ENCODE measurements at regions of chr3 and their contacts with region 1.

Region 1: GRCh38 chr3:15332405-15333098 is at the start of gene SH3BP5:
- DNase-seq: peak; percentile 76
- ATAC-seq: peak; percentile 95
- H3K4me3 Mint-ChIP-seq: peak within 1 kb of the TSS; percentile 84
- H3K27ac Mint-ChIP-seq: peak within 1 kb of the TSS; percentile 71
- H3K4me1 Mint-ChIP-seq: peaks cover 34% of the 10 kb centered on the region
- H3K27me3 Mint-ChIP-seq: peaks cover 25% of the 10 kb centered on the region
- total RNA-seq, gene SH3BP5: 12.6 to 15.0 TPM

Region 2: DNA sequence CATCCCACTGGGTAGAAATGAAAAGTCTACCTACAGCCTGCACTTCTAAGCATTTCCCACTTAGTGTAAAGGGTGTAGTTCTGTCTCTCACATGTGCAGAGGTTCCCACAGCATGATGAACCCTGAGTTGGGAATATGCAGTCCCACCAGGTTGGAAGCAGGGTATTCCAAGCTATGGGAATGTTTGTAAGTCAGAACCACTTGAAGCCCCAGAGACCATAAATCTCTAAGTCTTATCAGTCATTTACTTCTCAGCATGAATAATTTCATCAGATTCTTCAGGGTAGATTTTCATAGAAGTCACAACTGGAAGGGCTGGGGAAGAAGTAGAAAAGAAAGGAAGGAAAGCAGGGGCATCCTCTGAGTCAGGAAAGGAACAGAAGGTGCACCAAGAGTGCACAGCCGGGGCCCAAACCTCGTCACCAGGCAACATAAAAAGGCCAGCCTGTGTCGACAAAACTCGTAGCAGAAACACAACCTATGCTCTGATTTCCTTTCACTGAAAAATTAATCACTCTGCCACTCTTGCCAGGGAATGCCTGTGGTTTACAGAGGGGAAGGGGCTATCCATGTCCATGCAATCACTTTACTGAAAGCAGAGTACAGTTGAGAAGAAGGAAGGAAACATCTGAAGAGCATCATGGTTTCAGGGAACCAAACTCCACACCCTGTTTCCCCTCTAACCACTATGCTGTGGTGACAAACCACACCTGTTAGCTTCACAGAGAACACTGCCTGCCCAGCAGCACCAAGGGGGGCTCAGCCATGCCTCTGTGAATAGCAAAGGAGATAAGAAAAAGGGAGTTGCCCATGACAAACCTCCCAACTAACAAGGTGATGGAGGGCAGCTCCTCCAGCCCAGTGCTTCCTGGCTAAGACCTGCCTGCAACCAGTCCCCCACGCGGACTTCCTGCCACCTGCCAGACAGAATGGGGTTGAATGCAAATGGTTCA is 40.7 kb before region 1 on chr3:
- CTCF ChIA-PET with region 1: interaction called, 13 read pairs
- POLR2A ChIA-PET with region 1: no interaction called
- DNase-seq: peak; percentile 88
- ATAC-seq: peak; percentile 97
- H3K4me3 Mint-ChIP-seq: peak overlapping the region; percentile 66
- H3K27ac Mint-ChIP-seq: peak overlapping the region; percentile 95
- H3K4me1 Mint-ChIP-seq: peaks cover 55% of the 10 kb centered on the region
- H3K27me3 Mint-ChIP-seq: peaks cover 23% of the 10 kb centered on the region

Region 3: DNA sequence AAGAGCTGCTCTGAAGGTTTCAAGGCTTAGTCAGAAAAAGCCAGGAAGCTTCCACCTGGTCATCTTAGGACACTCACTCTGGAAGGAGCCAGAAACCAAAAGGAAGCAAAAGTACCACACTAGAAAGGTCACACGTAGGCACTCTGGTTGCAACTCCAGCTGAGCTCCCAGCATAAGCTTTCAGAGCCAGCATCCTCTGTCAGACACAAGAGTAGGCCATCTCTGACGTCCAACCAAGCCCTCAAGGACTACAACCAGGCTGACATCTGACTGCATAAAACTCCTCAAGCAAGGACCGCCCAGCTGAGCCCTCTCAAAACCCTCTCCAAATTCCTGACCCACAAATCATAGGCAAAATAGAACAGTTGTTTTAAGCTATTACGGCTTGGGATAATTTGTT is 13.0 kb before region 1 on chr3:
- CTCF ChIA-PET with region 1: interaction called, 14 read pairs
- POLR2A ChIA-PET with region 1: no interaction called
- DNase-seq: no peak
- ATAC-seq: no peak
- H3K4me3 Mint-ChIP-seq: no peak overlapping the region
- H3K27ac Mint-ChIP-seq: no peak overlapping the region
- H3K4me1 Mint-ChIP-seq: peaks cover 26% of the 10 kb centered on the region
- H3K27me3 Mint-ChIP-seq: no peaks in the 10 kb centered on the region

Region 4: DNA sequence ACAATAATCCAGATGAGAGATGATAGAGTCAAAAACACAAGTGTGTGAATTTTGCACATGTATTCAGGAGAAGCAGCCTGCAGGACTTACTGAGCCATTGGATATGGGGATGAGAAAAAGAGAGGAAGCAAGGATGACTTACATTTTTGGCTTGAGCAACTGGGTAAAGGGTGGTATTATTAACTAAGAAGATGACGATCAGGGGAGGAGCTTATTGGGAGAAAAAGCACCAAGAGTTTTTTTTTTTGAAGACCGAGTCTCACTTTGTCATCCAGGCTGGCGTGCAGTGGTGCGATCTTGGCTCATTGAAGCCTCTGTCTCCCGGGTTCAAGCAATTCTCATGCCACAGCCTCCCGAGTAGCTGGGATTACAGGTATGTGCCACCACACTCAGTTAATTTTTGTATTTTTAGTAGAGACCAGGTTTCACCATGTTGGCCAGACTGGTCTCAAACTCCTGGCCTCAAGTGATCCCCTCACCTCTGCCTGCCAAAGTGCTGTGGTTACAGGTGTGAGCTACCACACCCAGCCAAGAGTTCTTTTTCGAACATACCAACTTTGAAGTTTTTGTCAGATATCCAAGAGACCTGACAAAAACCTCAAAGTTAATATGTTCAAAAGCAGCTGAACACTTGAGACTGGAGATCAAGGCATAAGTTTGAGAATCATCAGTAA is 14.6 kb after region 1 on chr3:
- CTCF ChIA-PET with region 1: interaction called, 10 read pairs
- POLR2A ChIA-PET with region 1: interaction called, 4 read pairs
- DNase-seq: no peak
- ATAC-seq: no peak
- H3K4me3 Mint-ChIP-seq: no peak overlapping the region
- H3K27ac Mint-ChIP-seq: peak overlapping the region; percentile 21
- H3K4me1 Mint-ChIP-seq: peaks cover 32% of the 10 kb centered on the region
- H3K27me3 Mint-ChIP-seq: peaks cover 16% of the 10 kb centered on the region

Region 5: DNA sequence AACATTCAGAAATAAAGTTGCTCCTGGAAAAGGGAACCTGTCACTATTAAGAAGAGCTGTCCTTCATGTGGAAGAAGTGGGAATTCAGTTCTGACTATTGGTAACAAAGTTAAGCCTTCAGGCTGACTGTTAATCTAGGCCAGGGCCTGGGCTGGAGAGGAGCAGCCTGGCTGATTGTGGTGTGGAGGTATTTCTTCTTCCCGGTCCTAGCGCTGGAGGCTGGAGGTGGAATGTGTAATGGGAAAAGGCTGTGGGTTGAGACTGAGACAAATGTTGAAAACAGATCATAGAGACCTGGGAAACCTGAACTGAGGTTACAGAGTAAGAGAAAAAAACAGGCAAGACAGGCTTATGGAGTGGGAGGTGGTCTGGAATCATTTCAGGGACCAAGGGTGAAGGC is 23.6 kb after region 1 on chr3:
- CTCF ChIA-PET with region 1: interaction called, 21 read pairs
- POLR2A ChIA-PET with region 1: interaction called, 5 read pairs
- DNase-seq: no peak
- ATAC-seq: no peak
- H3K4me3 Mint-ChIP-seq: peak overlapping the region; percentile 20
- H3K27ac Mint-ChIP-seq: peak overlapping the region; percentile 64
- H3K4me1 Mint-ChIP-seq: peaks cover 45% of the 10 kb centered on the region
- H3K27me3 Mint-ChIP-seq: no peaks in the 10 kb centered on the region

Region 6: GRCh38 chr3:15361494-15362212 is 29.1 kb after region 1 on chr3:
- CTCF ChIA-PET with region 1: interaction called, 13 read pairs
- POLR2A ChIA-PET with region 1: interaction called, 5 read pairs
- DNase-seq: peak; percentile 24
- ATAC-seq: peak; percentile 50
- H3K4me3 Mint-ChIP-seq: no peak overlapping the region
- H3K27ac Mint-ChIP-seq: no peak overlapping the region
- H3K4me1 Mint-ChIP-seq: peaks cover 29% of the 10 kb centered on the region
- H3K27me3 Mint-ChIP-seq: peaks cover 7% of the 10 kb centered on the region

Region 7: DNA sequence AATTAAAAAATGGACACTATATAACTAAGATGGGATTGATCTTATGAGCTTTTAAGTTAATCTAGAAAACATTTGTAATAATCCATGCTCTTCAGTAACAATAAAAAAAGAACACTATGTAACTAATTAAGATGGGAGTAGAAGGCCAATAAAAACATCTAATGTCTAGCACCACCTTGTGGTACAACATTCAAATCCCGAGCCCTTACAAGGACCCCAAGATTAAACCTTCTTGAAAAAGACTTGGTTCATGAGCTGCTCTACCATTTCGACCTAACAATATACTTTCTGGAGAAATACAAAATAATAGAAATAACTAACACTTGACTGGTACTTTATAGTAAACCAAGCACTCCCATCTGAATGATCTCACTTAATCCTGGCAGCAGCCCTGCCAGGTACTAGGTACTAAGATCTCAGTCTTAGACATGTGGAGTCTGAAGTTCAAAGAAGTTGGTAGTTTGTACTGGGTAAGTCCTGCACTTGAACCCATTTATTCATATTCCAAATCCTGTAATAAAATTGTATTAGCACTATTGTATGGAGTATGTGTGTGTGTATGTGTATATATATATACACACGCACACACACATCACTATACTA is 73.0 kb after region 1 on chr3:
- CTCF ChIA-PET with region 1: interaction called, 10 read pairs
- POLR2A ChIA-PET with region 1: no interaction called
- DNase-seq: peak; percentile 52
- ATAC-seq: peak; percentile 81
- H3K4me3 Mint-ChIP-seq: no peak overlapping the region
- H3K27ac Mint-ChIP-seq: no peak overlapping the region
- H3K4me1 Mint-ChIP-seq: peaks cover 12% of the 10 kb centered on the region
- H3K27me3 Mint-ChIP-seq: peaks cover 1% of the 10 kb centered on the region